Activated T-helper 1 cell treated with anti-CD3 and anti-CD28 coated beads, Interleukin-12 subunit alpha, Interleukin-12 subunit beta, Interleukin-2, Interleukin-4 antibody, amounts not matched to agents 30 ng/mL and 10 ng/mL and 1 ng/mL, durations not matched to agents 14 hours and 24 hours and 36 hours (primary cell): ENCODE measurements at regions of chr2 and their contacts with region 1.

Region 1: DNA sequence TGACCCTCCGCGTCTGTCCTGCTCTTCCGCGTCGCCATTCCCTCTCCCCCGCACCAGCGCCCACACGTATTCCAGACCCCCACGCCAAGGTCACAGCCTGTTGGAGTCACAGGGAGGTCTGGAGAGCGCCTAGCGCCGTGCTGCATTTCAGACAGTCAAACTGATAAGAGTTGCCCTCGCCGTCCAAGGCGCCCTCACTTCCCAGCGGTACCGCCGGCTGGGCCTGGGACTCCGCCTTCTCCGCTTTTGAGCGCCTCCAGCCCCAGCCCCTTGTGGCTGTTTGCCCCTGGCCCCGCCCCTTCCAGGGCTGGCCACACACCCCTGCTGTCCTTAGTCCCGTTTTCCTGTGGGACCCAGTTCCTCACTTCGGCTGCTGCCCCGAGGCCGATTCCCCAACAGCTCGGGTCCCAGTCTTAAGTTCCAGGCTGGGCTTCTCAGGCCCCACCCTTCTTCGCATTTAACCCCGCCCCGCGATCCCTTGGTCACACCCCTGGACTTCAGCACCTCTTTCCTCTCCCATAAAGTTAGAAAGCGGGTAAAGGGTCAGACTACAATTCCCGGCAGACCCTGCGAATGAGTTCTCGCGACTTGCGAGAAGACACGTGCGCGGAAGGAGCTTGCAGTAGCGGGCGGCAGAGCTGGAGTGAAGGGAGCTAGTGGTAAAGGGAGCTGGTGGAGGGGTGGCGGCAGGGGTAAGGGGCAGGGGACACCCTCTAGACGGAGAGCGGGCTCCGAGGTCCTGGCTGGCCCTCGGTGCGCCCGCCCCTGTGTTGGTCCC is at the start of gene GMPPA:
- DNase-seq: peak; percentile 94
- H3K4me3 Mint-ChIP-seq: peak within 1 kb of the TSS; percentile 93
- H3K27ac Mint-ChIP-seq: peak within 1 kb of the TSS; percentile 91
- H3K4me1 Mint-ChIP-seq: peaks cover 36% of the 10 kb centered on the region
- H3K27me3 Mint-ChIP-seq: peaks cover 35% of the 10 kb centered on the region
- total RNA-seq, gene GMPPA: 41.3 and 50.3 TPM in 2 replicates

Region 2: DNA sequence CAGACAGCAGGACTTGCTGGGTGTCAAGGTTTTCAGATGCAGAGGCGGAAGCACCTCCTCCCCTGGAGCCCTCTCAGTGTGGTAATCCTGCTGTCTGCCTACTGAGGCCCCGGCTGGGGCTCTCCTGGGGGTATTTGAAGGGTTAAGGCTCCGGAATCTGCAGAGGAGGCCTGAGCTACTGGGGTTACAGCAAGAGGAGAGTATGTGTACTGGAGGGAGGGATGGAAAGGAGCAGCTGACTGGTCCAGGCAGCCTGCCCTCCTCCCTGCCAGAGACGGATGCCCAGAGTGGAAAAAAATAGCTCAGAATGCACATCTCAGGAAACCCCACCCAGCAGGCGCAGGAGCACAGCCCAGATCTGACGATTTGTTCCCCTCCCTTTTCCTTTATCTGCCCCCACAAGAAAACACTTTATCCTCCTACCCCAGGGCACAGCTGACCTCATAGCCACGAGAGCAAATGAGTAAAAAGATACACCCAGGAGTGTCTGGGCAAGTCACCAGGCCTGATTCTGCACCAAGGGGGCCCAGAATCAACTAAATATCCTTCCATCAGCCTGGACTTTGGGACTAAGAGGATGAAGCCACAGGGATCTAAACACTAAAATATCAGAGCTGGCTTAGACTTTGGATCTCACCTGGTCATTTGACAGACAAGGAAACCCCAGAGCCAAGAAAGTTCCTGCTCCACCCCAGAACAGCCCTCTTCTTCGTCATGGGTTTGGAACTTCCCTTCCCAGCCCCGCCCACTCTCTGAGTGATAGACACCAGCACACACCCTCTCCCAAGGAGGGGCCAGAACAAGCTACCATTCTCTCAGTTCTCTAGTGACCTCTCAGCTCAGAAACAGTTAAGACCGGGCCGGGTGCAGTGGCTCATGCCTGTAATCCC is 1211.7 kb before region 1 on chr2:
- intact Hi-C with region 1: loop called (anchors 5 kb)
- DNase-seq: peak; percentile 82
- H3K4me3 Mint-ChIP-seq: peak overlapping the region; percentile 94
- H3K27ac Mint-ChIP-seq: peak overlapping the region; percentile 99
- H3K4me1 Mint-ChIP-seq: peaks cover 72% of the 10 kb centered on the region
- H3K27me3 Mint-ChIP-seq: no peaks in the 10 kb centered on the region

Region 3: GRCh38 chr2:219160186-219161017 is 338.1 kb before region 1 on chr2 and contains the start of gene NHEJ1:
- intact Hi-C with region 1: loop called (anchors 1 kb)
- DNase-seq: peak; percentile 89
- H3K4me3 Mint-ChIP-seq: peak within 1 kb of the TSS; percentile 90
- H3K27ac Mint-ChIP-seq: peak within 1 kb of the TSS; percentile 99
- H3K4me1 Mint-ChIP-seq: peaks cover 20% of the 10 kb centered on the region
- H3K27me3 Mint-ChIP-seq: no peaks in the 10 kb centered on the region
- total RNA-seq, gene NHEJ1: 18.1 and 20.7 TPM in 2 replicates

Region 4: GRCh38 chr2:219253753-219254590 is 244.5 kb before region 1 on chr2 and contains the start of gene TUBA4A:
- intact Hi-C with region 1: loop called (anchors 1 kb)
- DNase-seq: peak; percentile 87
- H3K4me3 Mint-ChIP-seq: peak within 1 kb of the TSS; percentile 93
- H3K27ac Mint-ChIP-seq: peak within 1 kb of the TSS; percentile 98
- H3K4me1 Mint-ChIP-seq: peaks cover 50% of the 10 kb centered on the region
- H3K27me3 Mint-ChIP-seq: no peaks in the 10 kb centered on the region
- total RNA-seq, gene TUBA4A: 211 and 217 TPM in 2 replicates

Region 5: DNA sequence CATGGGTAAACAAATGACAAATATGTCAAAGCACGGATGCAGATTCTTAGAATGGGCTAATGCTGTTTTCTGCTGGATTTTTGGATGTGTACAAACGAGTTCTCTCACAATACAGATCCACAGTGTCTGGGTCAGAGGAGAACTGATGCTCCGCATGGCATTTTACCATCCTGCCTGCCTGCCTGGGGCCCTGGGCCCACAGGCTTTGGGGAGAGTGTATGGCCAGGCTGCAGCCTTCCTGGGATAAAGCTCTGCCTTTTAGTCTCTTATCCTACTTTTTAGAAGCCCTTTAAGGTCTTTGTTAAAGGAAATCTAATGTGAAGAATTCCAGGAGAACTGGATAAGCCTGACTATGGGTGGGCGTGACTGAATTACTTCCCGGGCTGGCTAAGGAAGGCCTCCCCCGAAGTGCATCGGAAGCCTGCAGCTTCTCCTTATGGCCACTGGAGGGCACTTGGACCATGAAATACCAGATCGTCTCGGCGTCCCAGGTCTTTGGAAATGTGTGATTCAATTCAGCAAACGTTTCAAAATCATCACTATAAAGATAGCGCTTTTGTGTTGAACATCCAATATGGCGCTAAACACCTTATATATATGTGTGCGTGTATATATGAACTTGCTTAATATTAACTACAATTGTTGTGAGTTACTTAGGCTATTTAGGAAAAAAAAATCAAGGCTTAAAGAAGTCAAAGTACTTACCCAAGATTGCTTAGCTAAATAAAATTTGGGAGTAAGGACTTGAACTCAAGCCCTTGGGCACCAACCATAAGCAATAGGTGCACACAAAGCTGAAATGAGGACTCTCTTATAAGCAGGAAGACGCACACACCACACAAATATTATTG is 95.6 kb before region 1 on chr2:
- intact Hi-C with region 1: loop called (anchors 1 kb)
- DNase-seq: peak; percentile 45
- H3K4me3 Mint-ChIP-seq: no peak overlapping the region
- H3K27ac Mint-ChIP-seq: no peak overlapping the region
- H3K4me1 Mint-ChIP-seq: no peaks in the 10 kb centered on the region
- H3K27me3 Mint-ChIP-seq: peaks cover 14% of the 10 kb centered on the region

Region 6: GRCh38 chr2:219543601-219544358 is 45.3 kb after region 1 on chr2 and contains the starts of genes CHPF and TMEM198:
- intact Hi-C with region 1: loop called (anchors 1 kb)
- DNase-seq: peak; percentile 94
- H3K4me3 Mint-ChIP-seq: peak within 1 kb of the TSS; percentile 93
- H3K27ac Mint-ChIP-seq: peak within 1 kb of the TSS; percentile 85
- H3K4me1 Mint-ChIP-seq: peaks cover 20% of the 10 kb centered on the region
- H3K27me3 Mint-ChIP-seq: peaks cover 25% of the 10 kb centered on the region
- total RNA-seq, gene CHPF: 41.3 and 43.4 TPM in 2 replicates
- total RNA-seq, gene TMEM198: 2.9 and 3.3 TPM in 2 replicates

Region 7: GRCh38 chr2:219642465-219643080 is 144.1 kb after region 1 on chr2:
- intact Hi-C with region 1: loop called (anchors 1 kb)
- DNase-seq: peak; percentile 83
- H3K4me3 Mint-ChIP-seq: no peak overlapping the region
- H3K27ac Mint-ChIP-seq: no peak overlapping the region
- H3K4me1 Mint-ChIP-seq: peaks cover 11% of the 10 kb centered on the region
- H3K27me3 Mint-ChIP-seq: peaks cover 11% of the 10 kb centered on the region

Region 8: GRCh38 chr2:220034426-220035130 is 536.1 kb after region 1 on chr2:
- intact Hi-C with region 1: no loop called
- DNase-seq: no peak
- H3K4me3 Mint-ChIP-seq: no peak overlapping the region
- H3K27ac Mint-ChIP-seq: no peak overlapping the region
- H3K4me1 Mint-ChIP-seq: no peaks in the 10 kb centered on the region
- H3K27me3 Mint-ChIP-seq: no peaks in the 10 kb centered on the region

Region 9: GRCh38 chr2:221176667-221177066 is 1678.2 kb after region 1 on chr2:
- intact Hi-C with region 1: no loop called
- DNase-seq: no peak
- H3K4me3 Mint-ChIP-seq: no peak overlapping the region
- H3K27ac Mint-ChIP-seq: no peak overlapping the region
- H3K4me1 Mint-ChIP-seq: no peaks in the 10 kb centered on the region
- H3K27me3 Mint-ChIP-seq: no peaks in the 10 kb centered on the region